Endothelial cell of umbilical vein (primary cell): ENCODE measurements at regions of chr9 and their contacts with region 1.

Region 1: GRCh38 chr9:3331817-3332216 is 194.0 kb downstream of the RFX3 start:
- DNase-seq: no peak
- H3K4me3 ChIP-seq: no peak overlapping the region
- H3K27ac ChIP-seq: no peak overlapping the region
- H3K4me1 ChIP-seq: peaks cover 33% of the 10 kb centered on the region
- H3K27me3 ChIP-seq: no peaks in the 10 kb centered on the region
- CTCF ChIP-seq: no peak
- POLR2A ChIP-seq: no peak

Region 2: GRCh38 chr9:3271581-3271980 is 60.2 kb before region 1 on chr9:
- CTCF ChIA-PET with region 1: no interaction called
- POLR2A ChIA-PET with region 1: no interaction called
- dilution Hi-C with region 1: no loop called
- intact Hi-C with region 1: no loop called
- DNase-seq: no peak
- H3K4me3 ChIP-seq: no peak overlapping the region
- H3K27ac ChIP-seq: no peak overlapping the region
- H3K4me1 ChIP-seq: no peaks in the 10 kb centered on the region
- H3K27me3 ChIP-seq: no peaks in the 10 kb centered on the region
- CTCF ChIP-seq: no peak
- POLR2A ChIP-seq: no peak

Region 3: DNA sequence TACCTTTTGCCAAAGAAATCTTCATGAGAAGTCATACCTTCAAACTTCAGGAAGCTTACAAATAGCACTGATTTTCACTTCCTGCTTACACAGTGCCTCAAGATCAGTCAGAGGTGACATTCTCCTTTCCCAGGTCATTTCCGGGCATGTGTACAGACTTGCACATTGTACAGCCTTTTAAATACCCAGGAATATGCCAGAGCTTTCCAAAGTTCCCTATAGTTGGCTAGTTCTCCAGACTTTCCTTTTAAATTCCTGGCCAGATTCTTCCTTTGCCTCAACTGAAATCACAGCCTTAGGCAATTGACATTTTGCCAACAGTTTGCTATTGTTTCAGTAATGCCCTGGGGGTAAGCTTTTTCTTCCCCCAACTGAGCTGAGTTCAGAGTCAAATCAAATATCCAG is 146.7 kb after region 1 on chr9:
- CTCF ChIA-PET with region 1: no interaction called
- POLR2A ChIA-PET with region 1: no interaction called
- dilution Hi-C with region 1: no loop called
- intact Hi-C with region 1: loop called (anchors 10 kb)
- DNase-seq: peak; percentile 76
- H3K4me3 ChIP-seq: no peak overlapping the region
- H3K27ac ChIP-seq: peak overlapping the region; percentile 83
- H3K4me1 ChIP-seq: peaks cover 58% of the 10 kb centered on the region
- H3K27me3 ChIP-seq: no peaks in the 10 kb centered on the region
- CTCF ChIP-seq: no peak
- POLR2A ChIP-seq: no peak

Region 4: GRCh38 chr9:4277531-4277991 is 945.7 kb after region 1 on chr9:
- CTCF ChIA-PET with region 1: no interaction called
- POLR2A ChIA-PET with region 1: no interaction called
- dilution Hi-C with region 1: no loop called
- intact Hi-C with region 1: loop called (anchors 10 kb)
- DNase-seq: peak; percentile 80
- H3K4me3 ChIP-seq: no peak overlapping the region
- H3K27ac ChIP-seq: peak overlapping the region; percentile 1
- H3K4me1 ChIP-seq: peaks cover 6% of the 10 kb centered on the region
- H3K27me3 ChIP-seq: no peaks in the 10 kb centered on the region
- CTCF ChIP-seq: no peak
- POLR2A ChIP-seq: no peak